ENCODE measurements at regions of chr17 and their contacts with region 1.

Region 1: GRCh38 chr17:80195731-80196529 is 24.2 kb downstream of the SGSH start:
- DNase-seq: peak; percentile 44 to 75 (median 56)
- H3K4me3 ChIP-seq: no peak overlapping the region
- H3K4me3 Mint-ChIP-seq: no peak overlapping the region
- H3K27ac ChIP-seq: no peak overlapping the region
- H3K27ac Mint-ChIP-seq: peak overlapping the region in 2 of 8 donors; percentile 17 to 38
- H3K4me1 ChIP-seq: no peaks in the 10 kb centered on the region
- H3K4me1 Mint-ChIP-seq: peaks cover 0 to 2% (median 0%) of the 10 kb centered on the region in 3 donors
- H3K27me3 ChIP-seq: no peaks in the 10 kb centered on the region
- H3K27me3 Mint-ChIP-seq: peaks cover 7 to 9% of the 10 kb centered on the region in 2 donors

Region 2: DNA sequence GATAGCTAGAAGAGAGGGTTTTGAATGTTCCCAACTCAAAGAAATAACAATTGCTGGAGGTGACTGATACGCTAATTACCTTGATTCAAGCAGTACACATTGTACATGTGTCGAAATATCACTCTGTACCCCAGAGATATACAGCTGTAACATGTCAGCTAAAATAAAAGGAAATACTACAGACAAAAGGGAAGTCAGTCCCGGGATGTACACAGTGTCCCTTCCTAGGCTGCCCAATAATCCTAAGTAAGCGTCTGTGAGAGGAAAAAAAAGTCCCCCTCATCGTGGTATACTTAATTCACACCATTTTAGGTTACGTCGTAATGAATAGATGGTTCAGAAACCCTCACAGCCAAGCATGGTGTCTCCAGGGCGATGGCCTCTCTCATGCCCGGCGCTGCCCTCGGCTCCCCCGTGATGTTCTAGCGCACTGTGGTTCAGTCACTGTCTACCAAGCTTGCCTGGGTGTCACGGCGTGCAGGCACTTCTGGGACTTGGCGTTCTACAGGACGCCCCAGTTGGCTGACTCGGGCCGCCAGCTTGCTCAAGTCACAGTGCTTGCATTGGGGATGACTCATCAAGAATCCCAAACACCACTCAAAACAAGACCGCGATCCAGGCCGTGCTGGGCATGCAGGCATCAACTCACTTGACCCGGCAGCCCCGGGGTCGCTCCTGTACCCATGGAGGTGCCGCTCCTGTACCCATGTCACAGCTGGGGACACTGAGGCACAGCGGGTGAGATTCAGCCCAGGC is 131.9 kb before region 1 on chr17:
- CTCF ChIA-PET with region 1: no interaction called
- POLR2A ChIA-PET with region 1: no interaction called
- DNase-seq: no peak
- H3K4me3 ChIP-seq: no peak overlapping the region
- H3K4me3 Mint-ChIP-seq: no peak overlapping the region
- H3K27ac ChIP-seq: no peak overlapping the region
- H3K27ac Mint-ChIP-seq: no peak overlapping the region
- H3K4me1 ChIP-seq: no peaks in the 10 kb centered on the region
- H3K4me1 Mint-ChIP-seq: peaks cover 0 to under 1% (median 0%) of the 10 kb centered on the region in 3 donors
- H3K27me3 ChIP-seq: no peaks in the 10 kb centered on the region
- H3K27me3 Mint-ChIP-seq: peaks cover 0 to 3% of the 10 kb centered on the region in 2 donors

Region 3: DNA sequence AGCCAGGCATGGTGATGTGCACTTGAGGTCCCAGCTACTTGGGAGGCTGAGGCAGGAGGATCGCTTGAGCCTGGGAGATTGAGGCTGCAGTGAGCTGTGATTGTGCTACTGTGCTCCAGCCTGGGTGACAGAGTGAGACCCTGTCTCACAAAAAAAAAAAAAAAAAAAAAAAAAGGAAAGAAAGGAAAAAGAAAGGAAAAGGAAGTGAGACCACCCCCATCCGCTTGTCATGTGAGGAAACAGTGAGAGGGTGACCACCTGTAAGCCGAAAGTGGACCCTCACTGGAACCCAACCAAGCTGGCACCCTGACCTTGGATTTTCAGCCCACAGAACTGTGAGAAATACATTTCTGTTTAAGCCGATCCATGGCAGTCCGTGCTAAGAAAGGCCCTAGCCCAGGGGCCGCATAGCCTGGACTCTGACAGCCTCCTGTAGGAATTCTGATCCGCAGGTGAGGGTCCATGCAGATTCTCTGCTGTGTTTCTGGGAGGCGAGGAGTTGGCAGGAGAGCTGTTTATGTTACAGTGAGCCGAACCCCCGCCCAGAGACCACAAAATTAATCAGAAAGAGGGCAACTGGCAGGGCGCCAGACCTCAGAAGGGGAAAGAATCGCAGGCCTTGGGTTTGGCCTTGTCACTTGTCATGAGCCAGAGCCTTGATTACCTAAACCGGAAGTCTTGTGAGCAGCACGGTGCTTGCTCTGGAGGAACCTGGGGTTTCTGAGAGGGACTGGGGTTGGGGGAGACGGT is 23.3 kb after region 1 on chr17:
- CTCF ChIA-PET with region 1: interaction called, 10 read pairs
- POLR2A ChIA-PET with region 1: interaction called, 5 read pairs
- DNase-seq: peak; percentile 87 to 96 (median 90)
- H3K4me3 ChIP-seq: peak overlapping the region; percentile 99
- H3K4me3 Mint-ChIP-seq: peak overlapping the region; percentile 90 to 99 (median 95)
- H3K27ac ChIP-seq: peak overlapping the region; percentile 94
- H3K27ac Mint-ChIP-seq: peak overlapping the region; percentile 87 to 99 (median 96)
- H3K4me1 ChIP-seq: peaks cover 31% of the 10 kb centered on the region
- H3K4me1 Mint-ChIP-seq: peaks cover 38 to 63% (median 44%) of the 10 kb centered on the region in 3 donors
- H3K27me3 ChIP-seq: no peaks in the 10 kb centered on the region
- H3K27me3 Mint-ChIP-seq: no peaks in the 10 kb centered on the region

Region 4: DNA sequence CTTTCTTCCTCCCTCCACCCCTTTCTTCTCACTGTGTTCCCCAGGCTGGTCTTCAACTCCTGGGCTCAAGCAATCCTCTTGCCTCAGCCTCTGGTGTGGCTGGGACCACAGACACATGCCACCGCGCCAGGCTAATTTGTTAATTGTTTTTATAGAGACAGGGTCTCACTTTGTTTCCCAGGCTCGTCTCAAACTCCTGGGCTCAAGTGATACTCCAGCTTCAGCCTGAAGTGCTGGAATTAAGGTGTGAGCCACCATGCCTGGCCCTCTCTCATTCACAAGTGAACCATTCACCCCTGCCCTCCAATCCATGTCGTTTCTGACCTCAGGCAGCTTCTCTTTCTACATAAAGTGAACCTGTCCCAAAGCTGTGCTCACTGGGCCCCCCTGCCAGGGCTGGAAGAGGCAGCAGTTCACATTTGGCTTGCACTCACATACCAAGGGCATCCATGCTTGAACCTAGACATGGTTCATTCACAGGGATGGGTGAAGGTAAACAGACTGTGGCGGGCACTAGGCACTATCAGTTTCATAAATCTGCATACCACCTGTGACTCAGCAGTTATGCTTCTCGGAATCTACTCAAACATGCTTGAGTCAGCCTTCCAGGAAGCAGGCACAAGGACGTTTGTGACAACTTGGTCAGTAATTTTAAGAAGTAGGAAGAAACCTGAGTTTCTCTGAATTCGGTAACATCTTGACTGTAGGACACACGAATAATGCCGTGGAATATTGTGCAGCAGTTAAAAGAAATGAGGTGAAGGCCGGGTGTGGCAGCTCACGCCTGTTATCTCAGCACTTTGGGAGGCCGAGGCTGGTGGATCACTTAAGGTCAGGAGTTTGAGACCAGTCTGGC is 58.7 kb after region 1 on chr17:
- CTCF ChIA-PET with region 1: interaction called, 22 read pairs
- POLR2A ChIA-PET with region 1: no interaction called
- DNase-seq: peak in 3 of 5 donors; percentile 36 to 68 (median 47)
- H3K4me3 ChIP-seq: no peak overlapping the region
- H3K4me3 Mint-ChIP-seq: peak overlapping the region in 6 of 7 donors; percentile 43 to 76 (median 53)
- H3K27ac ChIP-seq: peak overlapping the region; percentile 79
- H3K27ac Mint-ChIP-seq: peak overlapping the region; percentile 83 to 90 (median 88)
- H3K4me1 ChIP-seq: peaks cover 16% of the 10 kb centered on the region
- H3K4me1 Mint-ChIP-seq: peaks cover 34 to 54% (median 43%) of the 10 kb centered on the region in 3 donors
- H3K27me3 ChIP-seq: no peaks in the 10 kb centered on the region
- H3K27me3 Mint-ChIP-seq: peaks cover 0 to 3% of the 10 kb centered on the region in 2 donors

Region 5: GRCh38 chr17:80263253-80264204 is 67.6 kb after region 1 on chr17:
- CTCF ChIA-PET with region 1: interaction called, 13 read pairs
- POLR2A ChIA-PET with region 1: no interaction called
- DNase-seq: peak; percentile 75 to 91 (median 79)
- H3K4me3 ChIP-seq: peak overlapping the region; percentile 98
- H3K4me3 Mint-ChIP-seq: peak overlapping the region; percentile 93 to 100 (median 96)
- H3K27ac ChIP-seq: peak overlapping the region; percentile 87
- H3K27ac Mint-ChIP-seq: peak overlapping the region; percentile 79 to 97 (median 94)
- H3K4me1 ChIP-seq: peaks cover 59% of the 10 kb centered on the region
- H3K4me1 Mint-ChIP-seq: peaks cover 50 to 59% (median 55%) of the 10 kb centered on the region in 3 donors
- H3K27me3 ChIP-seq: no peaks in the 10 kb centered on the region
- H3K27me3 Mint-ChIP-seq: peaks cover 0 to 8% of the 10 kb centered on the region in 2 donors